Thyroid gland (tissue), 4 donors: ENCODE measurements at regions of chr22 and their contacts with region 1.

Region 1: DNA sequence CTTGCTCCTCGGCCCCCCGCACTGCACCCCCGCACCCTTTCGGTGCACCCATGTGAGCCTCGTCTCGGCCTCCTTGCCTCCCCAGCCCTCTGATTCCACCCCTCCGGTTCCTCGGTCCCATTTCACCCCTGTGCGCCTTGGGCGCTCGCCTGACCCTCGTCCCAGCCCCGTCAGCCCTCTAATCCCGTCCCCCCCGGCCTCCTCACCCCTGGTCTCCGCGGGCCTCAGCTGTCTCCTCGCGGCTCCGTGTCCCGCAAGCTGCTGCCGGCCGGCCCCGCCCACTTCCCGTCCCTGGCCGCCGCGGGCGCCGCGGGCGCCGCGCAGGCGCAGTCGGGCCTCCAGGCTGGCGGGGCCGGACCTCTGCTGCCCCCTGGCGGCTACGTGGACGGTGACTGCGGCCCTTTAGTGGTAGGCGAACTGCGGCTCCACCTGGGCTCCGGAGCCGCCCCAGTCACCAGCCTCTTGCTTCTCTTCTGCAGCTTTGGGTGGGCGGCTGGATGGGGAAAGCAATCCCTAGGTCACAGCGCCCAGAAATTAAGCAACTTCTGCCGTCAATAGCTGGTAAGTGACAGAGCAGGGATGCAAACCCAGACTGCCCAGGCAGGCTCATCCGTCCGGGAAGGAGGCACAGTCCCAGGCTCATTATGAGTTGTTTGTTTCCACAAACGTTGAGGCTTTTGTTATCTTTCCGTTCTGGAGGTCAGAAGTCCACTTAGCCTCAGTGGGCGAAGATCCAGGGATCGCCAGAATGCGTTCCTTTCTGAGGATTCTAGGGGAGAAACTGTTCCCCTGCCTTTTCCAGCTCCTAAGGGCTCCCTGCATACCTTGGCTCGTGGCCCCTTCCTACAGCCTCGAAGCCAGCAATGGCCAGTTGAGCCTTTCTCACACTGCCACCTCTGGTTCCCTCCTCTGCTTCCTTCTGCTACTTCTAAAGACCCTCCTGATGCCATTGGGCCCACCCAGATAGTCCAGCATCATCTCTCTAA is at the start of gene PPM1F:
- DNase-seq: peak; percentile 83 to 85
- H3K4me3 ChIP-seq: peak within 1 kb of the TSS; percentile 31 to 65 (median 58)
- H3K27ac ChIP-seq: peak within 1 kb of the TSS in 2 of 3 donors; percentile 54 to 63
- H3K4me1 ChIP-seq: peaks cover 10 to 34% of the 10 kb centered on the region in 2 donors
- H3K27me3 ChIP-seq: no peaks in the 10 kb centered on the region
- CTCF ChIP-seq: peak; percentile 38 to 99 (median 85)
- POLR2A ChIP-seq: peak in 1 of 2 donors; percentile 32
- total RNA-seq, gene PPM1F: 19.5 to 27.5 (median 26.2) TPM

Region 2: GRCh38 chr22:21712894-21713712 is 239.8 kb before region 1 on chr22:
- intact Hi-C with region 1: loop called (anchors 5 kb)
- DNase-seq: peak; percentile 71 to 76
- H3K4me3 ChIP-seq: no peak overlapping the region
- H3K27ac ChIP-seq: no peak overlapping the region
- H3K4me1 ChIP-seq: peaks cover 0 to 7% of the 10 kb centered on the region in 2 donors
- H3K27me3 ChIP-seq: no peaks in the 10 kb centered on the region
- CTCF ChIP-seq: peak; percentile 46 to 93 (median 74)
- POLR2A ChIP-seq: no peak